GM12878 (cell line): ENCODE measurements at regions of chr11 and their contacts with region 1.

Region 1: GRCh38 chr11:42524534-42525227 is 787.1 kb upstream of the API5 start:
- DNase-seq: peak; percentile 5
- ATAC-seq: peak; percentile 96
- H3K4me3 ChIP-seq: no peak overlapping the region
- H3K27ac ChIP-seq: no peak overlapping the region
- H3K4me1 ChIP-seq: no peaks in the 10 kb centered on the region
- H3K27me3 ChIP-seq: no peaks in the 10 kb centered on the region
- CTCF ChIP-seq: peak; percentile 72 to 85 (median 77)
- EP300 ChIP-seq: no peak
- POLR2A ChIP-seq: no peak
- RAD21 ChIP-seq: peak; percentile 89

Region 2: DNA sequence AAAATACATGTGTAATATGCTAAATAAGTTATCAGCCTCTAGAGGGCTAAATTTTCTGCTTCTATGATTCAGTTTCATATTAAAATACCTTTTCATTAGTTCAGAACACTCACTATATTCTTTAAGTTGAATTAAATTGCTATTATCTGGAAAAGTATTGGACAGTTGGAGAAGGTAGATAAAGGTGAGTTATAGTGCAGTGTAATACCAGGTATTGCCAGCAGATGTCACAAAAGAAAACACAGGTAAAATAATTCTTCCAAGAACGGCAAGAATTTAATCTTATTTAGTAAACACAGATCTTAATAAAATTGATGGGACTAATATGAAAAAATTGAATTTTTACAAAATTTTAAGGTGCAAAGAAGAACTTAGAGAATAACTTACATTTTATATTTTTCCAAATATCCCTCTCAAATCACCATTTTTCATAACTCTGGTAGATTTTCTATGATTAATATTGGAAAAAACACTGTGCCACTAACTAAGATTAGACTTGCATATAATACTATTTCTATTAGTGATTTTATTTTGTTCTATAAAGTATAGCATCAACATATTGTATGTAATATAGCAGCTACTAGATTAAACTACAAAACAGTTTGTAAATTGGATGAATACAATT is 1063.5 kb before region 1 on chr11:
- CTCF ChIA-PET with region 1: interaction called, 36 read pairs
- POLR2A ChIA-PET with region 1: no interaction called
- RAD21 ChIA-PET with region 1: interaction called, 12 read pairs
- SMC1A ChIA-PET with region 1: interaction called, 15 read pairs
- in situ Hi-C with region 1: loop called (anchors 5 kb)
- intact Hi-C with region 1: loop called (anchors 1 kb)
- DNase-seq: no peak
- ATAC-seq: no peak
- H3K4me3 ChIP-seq: no peak overlapping the region
- H3K27ac ChIP-seq: no peak overlapping the region
- H3K4me1 ChIP-seq: no peaks in the 10 kb centered on the region
- H3K27me3 ChIP-seq: peaks cover 0 to 2% of the 10 kb centered on the region in 2 experiments; a peak in 1 of 4 replicates
- CTCF ChIP-seq: peak; percentile 47 to 62 (median 59)
- EP300 ChIP-seq: no peak
- POLR2A ChIP-seq: no peak
- RAD21 ChIP-seq: peak; percentile 47

Region 3: DNA sequence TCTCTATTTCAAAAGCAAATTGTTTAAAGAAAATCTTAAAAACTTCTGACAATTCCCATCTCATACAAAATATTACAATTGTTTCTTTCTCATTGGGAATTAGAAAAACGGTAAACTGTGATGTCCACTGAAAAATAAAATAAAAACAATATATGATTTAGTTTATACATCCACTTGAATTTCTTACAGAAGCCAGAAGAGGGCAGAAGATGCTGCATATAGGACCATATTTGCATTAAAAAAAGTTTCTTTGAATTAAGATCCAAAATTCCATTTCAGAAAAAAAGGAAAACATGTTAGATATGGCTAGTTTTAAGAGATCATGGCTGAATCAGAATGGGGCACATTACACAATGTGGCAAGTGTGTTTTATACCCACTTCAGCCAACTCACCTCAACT is 1026.0 kb before region 1 on chr11:
- CTCF ChIA-PET with region 1: interaction called, 4 read pairs
- POLR2A ChIA-PET with region 1: no interaction called
- RAD21 ChIA-PET with region 1: no interaction called
- SMC1A ChIA-PET with region 1: interaction called, 3 read pairs
- in situ Hi-C with region 1: loop called (anchors 10 kb)
- intact Hi-C with region 1: loop called (anchors 2 kb)
- DNase-seq: no peak
- ATAC-seq: no peak
- H3K4me3 ChIP-seq: no peak overlapping the region
- H3K27ac ChIP-seq: no peak overlapping the region
- H3K4me1 ChIP-seq: no peaks in the 10 kb centered on the region
- H3K27me3 ChIP-seq: no peaks in the 10 kb centered on the region
- CTCF ChIP-seq: peak in 1 of 3 experiments; percentile 9; a peak in 2 of 6 replicates
- EP300 ChIP-seq: no peak
- POLR2A ChIP-seq: no peak
- RAD21 ChIP-seq: peak; percentile 26; the same call in 1 of the 2 replicates

Region 4: GRCh38 chr11:42329929-42330565 is 194.6 kb before region 1 on chr11:
- CTCF ChIA-PET with region 1: no interaction called
- POLR2A ChIA-PET with region 1: no interaction called
- RAD21 ChIA-PET with region 1: no interaction called
- SMC1A ChIA-PET with region 1: no interaction called
- in situ Hi-C with region 1: no loop called
- intact Hi-C with region 1: no loop called
- DNase-seq: no peak
- ATAC-seq: no peak
- H3K4me3 ChIP-seq: no peak overlapping the region
- H3K27ac ChIP-seq: no peak overlapping the region
- H3K4me1 ChIP-seq: no peaks in the 10 kb centered on the region
- H3K27me3 ChIP-seq: no peaks in the 10 kb centered on the region
- CTCF ChIP-seq: no peak
- EP300 ChIP-seq: no peak
- POLR2A ChIP-seq: no peak
- RAD21 ChIP-seq: no peak

Region 5: GRCh38 chr11:42543844-42544419 is 19.3 kb after region 1 on chr11:
- CTCF ChIA-PET with region 1: interaction called, 10 read pairs
- POLR2A ChIA-PET with region 1: no interaction called
- RAD21 ChIA-PET with region 1: no interaction called
- SMC1A ChIA-PET with region 1: interaction called, 3 read pairs
- in situ Hi-C with region 1: no loop called
- intact Hi-C with region 1: no loop called
- DNase-seq: no peak
- ATAC-seq: no peak
- H3K4me3 ChIP-seq: no peak overlapping the region
- H3K27ac ChIP-seq: no peak overlapping the region
- H3K4me1 ChIP-seq: no peaks in the 10 kb centered on the region
- H3K27me3 ChIP-seq: no peaks in the 10 kb centered on the region
- CTCF ChIP-seq: no peak
- EP300 ChIP-seq: no peak
- POLR2A ChIP-seq: no peak
- RAD21 ChIP-seq: no peak

Region 6: DNA sequence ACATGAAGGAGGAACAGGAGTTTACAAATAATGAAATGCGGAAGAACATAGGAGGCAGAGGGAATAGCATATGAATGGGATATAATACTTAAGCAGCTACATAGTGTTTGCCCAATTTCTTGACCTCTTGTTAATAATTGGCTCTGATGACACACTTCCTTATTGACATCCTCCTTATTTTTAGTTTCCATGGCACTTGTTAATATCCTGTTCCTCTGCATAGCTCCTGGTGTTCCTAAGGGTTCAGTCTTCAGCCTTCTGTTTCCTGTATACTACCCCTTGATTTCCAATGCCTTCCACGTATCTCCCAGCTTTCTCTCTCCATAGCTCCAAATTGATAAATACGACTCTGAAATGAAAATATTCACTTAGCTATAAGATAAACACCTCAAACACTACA is 123.3 kb after region 1 on chr11:
- CTCF ChIA-PET with region 1: no interaction called
- POLR2A ChIA-PET with region 1: no interaction called
- RAD21 ChIA-PET with region 1: no interaction called
- SMC1A ChIA-PET with region 1: no interaction called
- in situ Hi-C with region 1: no loop called
- intact Hi-C with region 1: no loop called
- DNase-seq: no peak
- ATAC-seq: no peak
- H3K4me3 ChIP-seq: no peak overlapping the region
- H3K27ac ChIP-seq: no peak overlapping the region
- H3K4me1 ChIP-seq: no peaks in the 10 kb centered on the region
- H3K27me3 ChIP-seq: no peaks in the 10 kb centered on the region
- CTCF ChIP-seq: no peak
- EP300 ChIP-seq: no peak
- POLR2A ChIP-seq: no peak
- RAD21 ChIP-seq: no peak